ENCODE measurements at regions of chr17 and their contacts with region 1.

Region 1: GRCh38 chr17:76501018-76501826 is at the start of gene RHBDF2:
- DNase-seq: peak; percentile 87 to 97
- ATAC-seq: peak; percentile 73 to 81
- H3K4me3 ChIP-seq: peak within 1 kb of the TSS; percentile 81
- H3K27ac ChIP-seq: peak within 1 kb of the TSS; percentile 83 to 96
- H3K4me1 ChIP-seq: peaks cover 41% of the 10 kb centered on the region
- CTCF ChIP-seq: no peak
- EP300 ChIP-seq: no peak
- POLR2A ChIP-seq: peak; percentile 82
- RAD21 ChIP-seq: no peak
- polyA plus RNA-seq, gene RHBDF2: 14.0 and 19.9 TPM in 2 replicates

Region 2: GRCh38 chr17:76452660-76453430 is 48.4 kb before region 1 on chr17 and contains the start of gene UBE2O:
- CTCF ChIA-PET with region 1: interaction called, 1,994 read pairs
- POLR2A ChIA-PET with region 1: interaction called, 3 read pairs
- DNase-seq: peak; percentile 94 to 96
- ATAC-seq: peak; percentile 91 to 93
- H3K4me3 ChIP-seq: peak within 1 kb of the TSS; percentile 84
- H3K27ac ChIP-seq: peak within 1 kb of the TSS; percentile 85 to 94
- H3K4me1 ChIP-seq: peaks cover 28% of the 10 kb centered on the region
- CTCF ChIP-seq: peak; percentile 44; the same call in 2 of the 3 replicates
- EP300 ChIP-seq: no peak
- POLR2A ChIP-seq: peak; percentile 56
- RAD21 ChIP-seq: no peak
- polyA plus RNA-seq, gene UBE2O: 22.0 and 28.8 TPM in 2 replicates

Region 3: GRCh38 chr17:76485569-76485968 is 15.7 kb before region 1 on chr17:
- CTCF ChIA-PET with region 1: interaction called, 1,994 read pairs
- POLR2A ChIA-PET with region 1: interaction called, 6 read pairs
- DNase-seq: no peak
- ATAC-seq: peak; percentile 8 to 20; a peak in 2 of 6 replicates
- H3K4me3 ChIP-seq: no peak overlapping the region
- H3K27ac ChIP-seq: peak overlapping the region in 1 of 2 experiments; percentile 74; a peak in 4 of 6 replicates
- H3K4me1 ChIP-seq: peaks cover 27% of the 10 kb centered on the region
- CTCF ChIP-seq: no peak
- EP300 ChIP-seq: no peak
- POLR2A ChIP-seq: no peak
- RAD21 ChIP-seq: no peak

Region 4: GRCh38 chr17:76567634-76568432 is 66.6 kb after region 1 on chr17:
- CTCF ChIA-PET with region 1: no interaction called
- POLR2A ChIA-PET with region 1: no interaction called
- DNase-seq: no peak
- ATAC-seq: peak; percentile 30 to 46
- H3K4me3 ChIP-seq: no peak overlapping the region
- H3K27ac ChIP-seq: peak overlapping the region in 1 of 2 experiments; percentile 23; a peak in 2 of 6 replicates
- H3K4me1 ChIP-seq: peaks cover 34% of the 10 kb centered on the region; the same call in 2 of the 3 replicates
- CTCF ChIP-seq: no peak
- EP300 ChIP-seq: no peak
- POLR2A ChIP-seq: no peak
- RAD21 ChIP-seq: no peak

Measured in A549 (cell line).